ENCODE measurements at regions of chr14 and their contacts with region 1.

Region 1: GRCh38 chr14:60656686-60657455 is 7.6 kb upstream of the SIX1 start:
- DNase-seq: peak; percentile 68
- H3K4me3 ChIP-seq: peak overlapping the region; percentile 57 to 76 (median 72)
- H3K27ac ChIP-seq: no peak overlapping the region
- H3K4me1 ChIP-seq: peaks cover 20% of the 10 kb centered on the region
- H3K27me3 ChIP-seq: peaks cover 18% of the 10 kb centered on the region
- CTCF ChIP-seq: peak in 1 of 2 donors; percentile 58

Region 2: DNA sequence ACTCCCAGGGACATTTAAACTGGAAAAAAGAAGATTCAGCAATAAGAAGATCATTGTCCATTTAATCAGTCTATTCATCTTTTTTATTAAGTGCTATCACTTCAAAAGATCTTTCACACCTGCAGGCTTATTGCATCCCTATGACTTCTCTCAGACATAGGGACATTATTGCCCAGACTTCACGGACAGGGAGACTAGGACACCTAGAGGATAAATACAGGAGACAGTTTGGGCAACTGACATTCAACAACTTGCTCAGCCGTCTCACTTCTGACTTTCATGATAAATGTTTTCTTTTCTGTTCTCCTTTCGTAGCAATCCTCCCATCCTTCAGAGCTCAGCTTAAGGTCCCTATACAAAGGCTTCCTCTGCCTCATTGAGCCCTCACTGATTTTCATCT is 539.9 kb after region 1 on chr14:
- CTCF ChIA-PET with region 1: no interaction called
- dilution Hi-C with region 1: no loop called
- in situ Hi-C with region 1: no loop called
- intact Hi-C with region 1: loop called (anchors 10 kb)
- DNase-seq: peak; percentile 25
- H3K4me3 ChIP-seq: no peak overlapping the region
- H3K27ac ChIP-seq: no peak overlapping the region
- H3K4me1 ChIP-seq: no peaks in the 10 kb centered on the region
- H3K27me3 ChIP-seq: no peaks in the 10 kb centered on the region
- CTCF ChIP-seq: peak; percentile 49 to 67